ENCODE measurements at regions of chr2 and their contacts with region 1.

Region 1: DNA sequence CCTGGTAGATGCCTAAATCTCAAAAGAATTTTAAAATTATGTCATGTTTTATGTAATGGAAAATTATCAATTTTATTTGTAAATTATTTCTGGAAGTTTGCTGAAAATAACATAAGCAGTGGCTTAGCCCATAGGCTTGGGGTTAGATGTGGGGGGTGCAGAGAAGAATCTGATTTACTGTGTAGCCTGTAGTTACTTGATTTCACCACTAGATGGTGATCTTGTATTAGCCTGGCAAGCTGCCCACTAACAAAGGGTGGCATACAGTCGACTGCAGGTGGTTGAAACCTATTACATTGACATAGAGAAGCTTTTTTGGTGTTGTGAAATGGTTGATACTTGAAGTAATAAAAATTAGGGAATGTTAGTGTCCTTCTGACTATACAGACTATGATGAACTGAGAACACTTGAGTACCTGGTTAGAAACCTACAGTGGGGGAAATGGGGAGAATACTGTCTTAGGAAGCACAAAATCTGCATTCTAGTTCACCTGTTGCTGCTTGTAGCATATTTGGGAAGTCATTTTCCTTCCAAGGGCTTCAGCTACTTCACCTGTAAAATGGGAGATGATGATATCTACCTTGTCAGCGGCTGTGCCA is 191.0 kb upstream of the LHCGR start:
- DNase-seq: peak; percentile 20
- ATAC-seq: peak; percentile 98
- H3K4me3 ChIP-seq: no peak overlapping the region
- H3K27ac ChIP-seq: no peak overlapping the region
- H3K4me1 ChIP-seq: no peaks in the 10 kb centered on the region
- H3K27me3 ChIP-seq: no peaks in the 10 kb centered on the region; a peak in 1 of 4 replicates
- CTCF ChIP-seq: peak; percentile 83 to 90 (median 85); a peak in 5 of 6 replicates
- EP300 ChIP-seq: no peak
- POLR2A ChIP-seq: no peak
- RAD21 ChIP-seq: peak; percentile 97

Region 2: DNA sequence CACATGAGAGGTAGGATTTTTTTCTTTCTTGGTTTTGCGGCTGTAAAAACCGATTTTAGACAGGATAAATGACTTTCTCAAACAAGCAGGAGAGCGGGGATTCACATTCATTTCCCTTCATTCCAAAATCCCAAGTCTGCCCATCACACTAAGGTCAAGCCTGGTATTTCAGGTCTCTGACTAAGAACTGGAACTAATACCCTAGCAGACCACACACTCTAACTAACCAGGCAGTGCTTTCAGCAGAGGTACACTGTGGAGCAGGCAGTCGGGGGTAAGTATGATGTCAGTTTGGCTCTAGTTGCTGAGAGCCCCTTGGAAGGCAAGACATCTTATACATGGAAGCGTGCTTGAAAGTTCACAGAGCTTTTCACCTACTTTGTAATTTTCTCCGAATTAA is 62.9 kb before region 1 on chr2:
- CTCF ChIA-PET with region 1: no interaction called
- POLR2A ChIA-PET with region 1: no interaction called
- RAD21 ChIA-PET with region 1: no interaction called
- SMC1A ChIA-PET with region 1: no interaction called
- in situ Hi-C with region 1: no loop called
- intact Hi-C with region 1: no loop called
- DNase-seq: no peak
- ATAC-seq: no peak
- H3K4me3 ChIP-seq: no peak overlapping the region
- H3K27ac ChIP-seq: no peak overlapping the region
- H3K4me1 ChIP-seq: no peaks in the 10 kb centered on the region
- H3K27me3 ChIP-seq: no peaks in the 10 kb centered on the region
- CTCF ChIP-seq: no peak
- EP300 ChIP-seq: no peak
- POLR2A ChIP-seq: no peak
- RAD21 ChIP-seq: no peak

Region 3: DNA sequence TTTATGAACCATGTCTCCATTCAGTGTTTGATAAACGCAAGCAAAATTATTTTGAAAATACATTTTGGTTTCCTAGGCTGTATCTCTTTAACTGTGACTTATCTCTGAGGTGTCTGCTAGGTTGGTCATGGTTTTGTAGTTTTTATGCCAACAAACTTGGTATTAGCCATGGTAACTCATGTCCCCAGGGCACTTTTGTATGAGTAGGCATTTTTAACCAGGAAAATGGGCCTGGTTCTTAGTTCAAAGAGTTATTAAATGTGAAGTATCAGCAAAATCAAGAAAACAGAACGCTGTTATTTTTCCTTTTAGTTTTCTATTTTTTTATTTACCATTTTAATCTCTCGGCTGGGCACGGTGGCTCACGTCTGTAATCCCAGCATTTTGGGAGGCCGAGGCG is 11.7 kb before region 1 on chr2:
- CTCF ChIA-PET with region 1: interaction called, 10 read pairs
- POLR2A ChIA-PET with region 1: no interaction called
- RAD21 ChIA-PET with region 1: no interaction called
- SMC1A ChIA-PET with region 1: interaction called, 3 read pairs
- in situ Hi-C with region 1: no loop called
- intact Hi-C with region 1: no loop called
- DNase-seq: no peak
- ATAC-seq: no peak
- H3K4me3 ChIP-seq: no peak overlapping the region
- H3K27ac ChIP-seq: no peak overlapping the region
- H3K4me1 ChIP-seq: no peaks in the 10 kb centered on the region
- H3K27me3 ChIP-seq: peaks cover 0 to 2% of the 10 kb centered on the region in 2 experiments; a peak in 1 of 4 replicates
- CTCF ChIP-seq: no peak
- EP300 ChIP-seq: no peak
- POLR2A ChIP-seq: no peak
- RAD21 ChIP-seq: no peak

Region 4: DNA sequence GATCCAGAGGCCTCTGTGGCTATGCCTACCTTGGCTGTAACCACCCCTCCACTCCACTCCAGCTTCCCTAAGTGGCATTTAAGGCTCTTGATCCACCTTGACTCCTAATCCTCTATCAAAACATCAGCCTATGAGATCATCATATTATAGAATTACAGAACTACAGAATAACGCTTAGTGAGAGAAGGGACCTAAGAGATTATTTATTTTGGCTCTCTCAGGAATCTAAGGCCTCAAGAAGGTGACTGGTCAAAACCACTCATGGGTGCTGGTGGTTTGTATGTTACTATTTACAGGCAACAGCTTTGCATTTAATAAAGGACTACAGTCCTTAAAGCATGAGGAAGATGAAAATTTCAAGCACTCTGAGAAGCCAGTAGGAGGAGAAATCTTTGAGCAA is 88.9 kb after region 1 on chr2:
- CTCF ChIA-PET with region 1: no interaction called
- POLR2A ChIA-PET with region 1: no interaction called
- RAD21 ChIA-PET with region 1: no interaction called
- SMC1A ChIA-PET with region 1: no interaction called
- in situ Hi-C with region 1: no loop called
- intact Hi-C with region 1: no loop called
- DNase-seq: no peak
- ATAC-seq: no peak
- H3K4me3 ChIP-seq: no peak overlapping the region
- H3K27ac ChIP-seq: no peak overlapping the region
- H3K4me1 ChIP-seq: no peaks in the 10 kb centered on the region
- H3K27me3 ChIP-seq: no peaks in the 10 kb centered on the region
- CTCF ChIP-seq: no peak
- EP300 ChIP-seq: no peak
- POLR2A ChIP-seq: no peak
- RAD21 ChIP-seq: no peak

Region 5: DNA sequence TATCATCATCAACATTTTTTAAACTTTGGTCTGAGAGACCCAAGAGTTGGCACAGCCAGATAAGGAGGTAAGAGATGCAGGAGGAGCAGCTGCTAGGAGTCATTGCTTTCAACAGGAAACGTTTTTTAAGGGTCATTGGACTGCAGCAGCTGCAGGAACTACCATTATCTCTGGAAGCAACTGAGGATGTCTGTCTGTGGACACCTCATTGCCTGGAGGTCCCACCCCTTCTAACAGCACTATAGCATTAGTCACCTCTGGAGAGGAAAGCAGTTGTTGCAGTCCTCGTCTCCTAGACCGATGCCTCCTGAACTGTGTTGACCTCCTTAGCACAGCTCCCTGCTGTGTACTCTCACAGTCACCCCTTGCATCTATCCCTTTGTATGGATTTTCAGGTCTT is 229.3 kb after region 1 on chr2:
- CTCF ChIA-PET with region 1: no interaction called
- POLR2A ChIA-PET with region 1: no interaction called
- RAD21 ChIA-PET with region 1: no interaction called
- SMC1A ChIA-PET with region 1: no interaction called
- in situ Hi-C with region 1: no loop called
- intact Hi-C with region 1: loop called (anchors 10 kb)
- DNase-seq: no peak
- ATAC-seq: no peak
- H3K4me3 ChIP-seq: no peak overlapping the region
- H3K27ac ChIP-seq: no peak overlapping the region
- H3K4me1 ChIP-seq: no peaks in the 10 kb centered on the region
- H3K27me3 ChIP-seq: no peaks in the 10 kb centered on the region
- CTCF ChIP-seq: no peak
- EP300 ChIP-seq: no peak
- POLR2A ChIP-seq: no peak
- RAD21 ChIP-seq: no peak

Region 6: DNA sequence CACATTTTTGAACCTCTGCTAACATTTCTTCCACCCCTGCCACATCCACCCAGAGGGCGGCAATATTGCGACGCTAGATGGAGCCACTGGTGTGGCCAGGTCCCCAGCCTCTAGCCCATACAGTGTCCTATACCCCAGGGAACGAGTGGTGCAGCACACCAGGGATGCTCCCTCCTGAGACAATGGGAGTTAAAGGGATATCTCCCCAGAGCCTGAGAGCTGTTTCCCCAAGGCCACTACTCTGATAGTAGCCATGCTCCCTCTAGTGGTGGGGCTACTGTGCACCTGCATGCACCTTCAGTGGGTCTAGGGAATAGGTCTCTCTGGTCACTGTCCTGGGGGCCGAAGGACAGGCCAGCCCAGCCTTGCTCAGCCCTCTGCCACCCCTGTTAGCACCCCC is 544.2 kb after region 1 on chr2:
- CTCF ChIA-PET with region 1: interaction called, 7 read pairs
- POLR2A ChIA-PET with region 1: no interaction called
- RAD21 ChIA-PET with region 1: interaction called, 5 read pairs
- SMC1A ChIA-PET with region 1: interaction called, 4 read pairs
- in situ Hi-C with region 1: loop called (anchors 10 kb)
- intact Hi-C with region 1: loop called (anchors 1 kb)
- DNase-seq: no peak
- ATAC-seq: peak; percentile 96
- H3K4me3 ChIP-seq: no peak overlapping the region
- H3K27ac ChIP-seq: no peak overlapping the region
- H3K4me1 ChIP-seq: no peaks in the 10 kb centered on the region
- H3K27me3 ChIP-seq: no peaks in the 10 kb centered on the region
- CTCF ChIP-seq: peak; percentile 57 to 84 (median 61)
- EP300 ChIP-seq: no peak
- POLR2A ChIP-seq: no peak
- RAD21 ChIP-seq: peak; percentile 47

Region 7: DNA sequence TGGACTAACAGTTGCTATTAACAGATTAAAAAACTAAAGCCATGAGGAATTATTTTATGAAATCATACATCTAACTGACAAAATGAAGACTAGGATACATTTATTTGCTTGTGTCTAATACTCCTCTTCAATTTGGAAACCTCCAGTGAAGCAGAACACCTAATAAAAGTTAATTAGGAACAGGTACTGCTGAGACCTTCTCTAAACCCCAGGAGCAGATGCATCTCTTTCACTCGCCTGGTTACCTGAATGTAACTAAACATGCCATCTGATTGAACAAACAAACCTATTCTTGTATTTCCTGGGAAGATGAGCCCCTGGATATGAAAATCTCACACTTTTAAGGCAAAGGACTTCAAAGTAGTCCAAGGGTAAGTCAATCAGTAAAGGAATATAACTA is 1187.2 kb after region 1 on chr2:
- CTCF ChIA-PET with region 1: no interaction called
- POLR2A ChIA-PET with region 1: no interaction called
- RAD21 ChIA-PET with region 1: no interaction called
- SMC1A ChIA-PET with region 1: no interaction called
- in situ Hi-C with region 1: loop called (anchors 10 kb)
- intact Hi-C with region 1: no loop called
- DNase-seq: no peak
- ATAC-seq: no peak
- H3K4me3 ChIP-seq: no peak overlapping the region
- H3K27ac ChIP-seq: no peak overlapping the region
- H3K4me1 ChIP-seq: no peaks in the 10 kb centered on the region
- H3K27me3 ChIP-seq: no peaks in the 10 kb centered on the region
- CTCF ChIP-seq: no peak
- EP300 ChIP-seq: no peak
- POLR2A ChIP-seq: no peak
- RAD21 ChIP-seq: no peak

Region 8: GRCh38 chr2:50401772-50402653 is 1455.5 kb after region 1 on chr2:
- CTCF ChIA-PET with region 1: interaction called, 30 read pairs
- POLR2A ChIA-PET with region 1: no interaction called
- RAD21 ChIA-PET with region 1: interaction called, 13 read pairs
- SMC1A ChIA-PET with region 1: interaction called, 11 read pairs
- in situ Hi-C with region 1: loop called (anchors 10 kb)
- intact Hi-C with region 1: loop called (anchors 2 kb)
- DNase-seq: no peak
- ATAC-seq: peak; percentile 80
- H3K4me3 ChIP-seq: no peak overlapping the region
- H3K27ac ChIP-seq: no peak overlapping the region
- H3K4me1 ChIP-seq: no peaks in the 10 kb centered on the region
- H3K27me3 ChIP-seq: no peaks in the 10 kb centered on the region
- CTCF ChIP-seq: peak; percentile 80 to 90 (median 86)
- EP300 ChIP-seq: no peak
- POLR2A ChIP-seq: no peak
- RAD21 ChIP-seq: peak; percentile 85

Measured in GM12878 (cell line).